Naive thymus-derived CD4-positive, alpha-beta T cell (primary cell): ENCODE measurements at regions of chr10 and their contacts with region 1.

Region 1: DNA sequence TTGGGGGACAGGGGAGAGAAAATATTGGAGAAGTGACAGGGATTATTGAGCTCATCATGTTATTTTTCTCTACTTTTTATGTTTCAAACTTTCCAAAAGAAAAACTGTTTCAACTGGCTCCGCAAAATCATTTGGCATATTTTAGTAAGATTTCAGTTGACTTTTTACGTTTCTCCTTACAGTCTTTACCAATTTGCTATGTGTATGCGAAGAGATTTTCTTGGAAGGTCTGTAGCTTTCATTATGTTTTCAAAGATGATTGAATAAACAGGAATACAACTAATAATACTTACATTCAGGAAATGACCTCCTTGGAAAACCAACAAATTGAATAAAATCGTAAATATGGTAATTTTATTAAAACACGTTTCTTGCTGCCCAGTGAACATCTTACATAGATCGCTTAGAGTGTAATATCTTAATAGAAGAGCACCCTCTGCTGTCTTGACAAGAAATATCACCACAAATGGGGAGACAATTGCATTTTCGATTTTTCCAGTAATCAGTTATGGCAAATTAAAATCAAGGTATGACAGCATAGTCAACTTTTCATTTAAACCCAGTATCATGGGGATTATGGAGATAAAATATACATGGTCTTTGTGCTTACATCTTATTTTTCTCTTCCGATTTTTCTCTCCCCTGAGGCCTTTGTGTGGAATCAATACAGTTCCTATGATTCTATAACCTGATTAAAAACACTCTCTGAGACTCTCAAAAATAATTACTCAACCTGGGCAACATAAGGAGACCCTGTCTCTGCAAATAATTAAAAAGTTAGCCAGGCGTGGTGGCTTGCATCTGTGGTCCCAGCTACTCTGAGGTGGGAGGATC is 43.1 kb downstream of the MBL2 start:
- DNase-seq: no peak
- ATAC-seq: no peak
- H3K4me3 ChIP-seq: no peak overlapping the region
- H3K4me3 Mint-ChIP-seq: no peak overlapping the region
- H3K27ac ChIP-seq: no peak overlapping the region
- H3K27ac Mint-ChIP-seq: no peak overlapping the region
- H3K4me1 ChIP-seq: no peaks in the 10 kb centered on the region
- H3K4me1 Mint-ChIP-seq: no peaks in the 10 kb centered on the region
- H3K27me3 ChIP-seq: no peaks in the 10 kb centered on the region
- H3K27me3 Mint-ChIP-seq: no peaks in the 10 kb centered on the region

Region 2: GRCh38 chr10:52621635-52622079 is 107.8 kb before region 1 on chr10:
- CTCF ChIA-PET with region 1: no interaction called
- POLR2A ChIA-PET with region 1: no interaction called
- intact Hi-C with region 1: no loop called
- DNase-seq: no peak
- ATAC-seq: no peak
- H3K4me3 ChIP-seq: no peak overlapping the region
- H3K4me3 Mint-ChIP-seq: no peak overlapping the region
- H3K27ac ChIP-seq: no peak overlapping the region
- H3K27ac Mint-ChIP-seq: no peak overlapping the region
- H3K4me1 ChIP-seq: no peaks in the 10 kb centered on the region
- H3K4me1 Mint-ChIP-seq: no peaks in the 10 kb centered on the region
- H3K27me3 ChIP-seq: no peaks in the 10 kb centered on the region
- H3K27me3 Mint-ChIP-seq: no peaks in the 10 kb centered on the region

Region 3: GRCh38 chr10:52644373-52645186 is 84.9 kb before region 1 on chr10:
- CTCF ChIA-PET with region 1: no interaction called
- POLR2A ChIA-PET with region 1: no interaction called
- intact Hi-C with region 1: loop called in 1 of 2 experiments (anchors 1 kb)
- DNase-seq: peak in 1 of 9 donors; percentile 3
- ATAC-seq: no peak
- H3K4me3 ChIP-seq: no peak overlapping the region
- H3K4me3 Mint-ChIP-seq: no peak overlapping the region
- H3K27ac ChIP-seq: no peak overlapping the region
- H3K27ac Mint-ChIP-seq: no peak overlapping the region
- H3K4me1 ChIP-seq: no peaks in the 10 kb centered on the region
- H3K4me1 Mint-ChIP-seq: peaks cover 0 to 1% (median 0%) of the 10 kb centered on the region in 7 donors
- H3K27me3 ChIP-seq: no peaks in the 10 kb centered on the region
- H3K27me3 Mint-ChIP-seq: no peaks in the 10 kb centered on the region

Region 4: DNA sequence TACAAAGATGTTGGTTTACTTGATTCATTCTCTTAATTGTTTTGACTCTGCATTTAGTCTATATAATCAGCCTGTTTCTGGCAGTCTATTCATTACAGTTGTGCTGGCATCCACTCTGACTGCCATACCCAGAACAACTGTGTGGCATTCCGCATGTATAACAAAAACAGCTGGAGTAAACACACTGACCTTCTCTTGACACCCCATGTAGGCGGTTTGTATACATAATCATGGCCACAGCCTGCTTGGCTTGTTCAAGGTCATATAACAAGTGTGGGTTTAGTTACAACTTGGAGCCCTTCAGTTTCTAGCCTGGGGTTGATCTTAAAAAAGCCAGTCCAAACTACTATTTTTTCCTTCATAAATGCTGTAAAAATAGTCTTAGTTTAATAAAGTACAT is 27.8 kb before region 1 on chr10:
- CTCF ChIA-PET with region 1: no interaction called
- POLR2A ChIA-PET with region 1: no interaction called
- intact Hi-C with region 1: loop called in 1 of 2 experiments (anchors 2 kb)
- DNase-seq: no peak
- ATAC-seq: no peak
- H3K4me3 ChIP-seq: no peak overlapping the region
- H3K4me3 Mint-ChIP-seq: no peak overlapping the region
- H3K27ac ChIP-seq: no peak overlapping the region
- H3K27ac Mint-ChIP-seq: no peak overlapping the region
- H3K4me1 ChIP-seq: no peaks in the 10 kb centered on the region
- H3K4me1 Mint-ChIP-seq: no peaks in the 10 kb centered on the region
- H3K27me3 ChIP-seq: no peaks in the 10 kb centered on the region
- H3K27me3 Mint-ChIP-seq: no peaks in the 10 kb centered on the region